ENCODE measurements at regions of chr16 and their contacts with region 1.

Region 1: DNA sequence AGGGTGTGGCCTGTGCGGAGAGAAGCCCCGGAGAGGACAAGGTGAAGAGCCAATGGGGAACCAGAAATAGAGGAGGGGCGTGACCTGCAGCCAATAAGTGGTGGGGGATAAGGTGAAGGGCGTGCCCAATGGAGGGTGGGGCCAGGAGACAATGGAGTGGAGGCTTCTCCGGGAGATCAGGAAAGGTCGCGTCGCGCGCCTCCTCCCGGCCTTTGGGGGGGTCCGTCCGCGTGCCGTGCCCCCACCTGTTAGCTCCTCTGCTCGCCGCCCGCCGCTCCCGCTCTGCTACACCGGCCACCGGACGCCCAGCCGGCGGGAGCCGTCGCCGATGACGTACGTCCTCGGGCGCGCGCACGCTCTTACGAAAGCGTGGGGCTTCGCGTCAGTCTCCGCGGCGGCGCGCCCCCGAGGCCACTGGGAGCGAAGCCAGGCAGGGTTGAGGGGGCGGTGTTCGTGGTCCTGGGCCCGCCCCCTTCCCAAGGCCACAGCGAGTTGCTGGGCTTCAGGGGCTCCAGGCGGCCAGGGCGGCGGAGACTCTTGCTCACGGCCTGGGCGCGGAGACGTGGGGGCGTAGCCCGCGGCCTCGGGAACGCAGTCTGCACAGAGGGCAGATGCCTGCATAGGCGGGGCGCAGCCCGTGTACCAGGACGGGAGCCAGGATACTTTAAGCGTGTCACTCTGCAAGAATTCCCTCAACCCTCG is at the start of gene MATCAP1:
- DNase-seq: peak; percentile 95
- H3K4me3 ChIP-seq: peak within 1 kb of the TSS; percentile 42 to 69 (median 45)
- H3K27ac ChIP-seq: peak within 1 kb of the TSS; percentile 89 to 95 (median 93)
- H3K4me1 ChIP-seq: peaks cover 16 to 27% of the 10 kb centered on the region in 2 donors
- H3K27me3 ChIP-seq: no peaks in the 10 kb centered on the region
- CTCF ChIP-seq: no peak
- POLR2A ChIP-seq: peak in 1 of 2 donors; percentile 70
- total RNA-seq, gene MATCAP1: 20.3 to 50.0 (median 32.4) TPM

Region 2: GRCh38 chr16:66894948-66895688 is 288.7 kb before region 1 on chr16:
- intact Hi-C with region 1: loop called (anchors 10 kb)
- DNase-seq: peak; percentile 80 to 82
- H3K4me3 ChIP-seq: no peak overlapping the region
- H3K27ac ChIP-seq: peak overlapping the region in 1 of 3 donors; percentile 5
- H3K4me1 ChIP-seq: peaks cover 49 to 62% of the 10 kb centered on the region in 2 donors
- H3K27me3 ChIP-seq: no peaks in the 10 kb centered on the region
- CTCF ChIP-seq: peak; percentile 65 to 95 (median 90)
- POLR2A ChIP-seq: no peak

Region 3: GRCh38 chr16:66977341-66978113 is 206.3 kb before region 1 on chr16:
- intact Hi-C with region 1: loop called (anchors 10 kb)
- DNase-seq: peak; percentile 86 to 90
- H3K4me3 ChIP-seq: no peak overlapping the region
- H3K27ac ChIP-seq: peak overlapping the region in 1 of 3 donors; percentile 45
- H3K4me1 ChIP-seq: peaks cover 0 to 14% of the 10 kb centered on the region in 2 donors
- H3K27me3 ChIP-seq: no peaks in the 10 kb centered on the region
- CTCF ChIP-seq: peak; percentile 81 to 98 (median 96)
- POLR2A ChIP-seq: no peak

Measured in thyroid gland (tissue), 4 donors.